CD4-positive, alpha-beta T cell (primary cell): ENCODE measurements at regions of chr11 and their contacts with region 1.

Region 1: DNA sequence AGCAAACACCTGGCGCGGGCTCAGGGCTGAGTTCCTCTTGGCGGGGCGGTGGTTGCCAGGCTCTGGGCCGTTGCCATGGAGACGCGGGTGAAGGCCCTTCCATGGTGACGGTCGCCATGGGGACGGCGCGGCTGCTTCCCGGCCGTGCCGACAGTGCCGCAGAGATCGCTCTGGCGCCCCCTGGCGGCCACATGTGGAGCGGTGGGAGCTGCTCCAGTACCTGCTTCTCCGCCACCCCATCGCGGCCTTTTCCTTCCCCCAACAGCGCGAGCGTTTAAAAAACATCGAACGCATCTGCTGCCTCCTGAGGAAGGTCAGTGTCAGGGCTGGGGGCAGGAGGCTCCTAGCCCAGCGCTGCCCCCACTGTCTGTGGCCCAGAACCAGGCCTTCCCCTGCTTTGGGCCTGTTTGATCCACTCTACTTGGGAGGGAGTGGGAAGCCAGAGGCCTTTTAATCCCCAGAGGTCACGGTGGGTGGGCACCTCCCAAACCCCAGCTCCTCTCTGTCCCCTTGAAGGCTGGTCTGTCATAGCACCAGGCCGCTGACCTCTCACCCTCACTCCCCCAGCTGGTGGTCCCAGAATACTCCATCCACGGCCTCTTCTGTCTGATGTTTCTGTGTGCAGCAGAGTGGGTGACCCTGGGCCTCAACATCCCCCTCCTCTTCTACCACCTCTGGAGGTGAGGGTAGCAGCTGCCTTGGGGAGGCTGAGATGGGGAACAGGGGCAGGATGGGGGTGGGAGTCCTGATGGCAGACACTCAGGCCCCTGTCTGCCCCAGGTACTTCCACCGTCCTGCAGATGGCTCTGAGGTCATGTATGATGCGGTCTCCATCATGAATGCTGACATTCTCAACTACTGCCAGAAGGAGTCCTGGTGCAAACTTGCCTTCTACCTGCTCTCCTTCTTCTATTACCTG is 4.8 kb downstream of the CNIH2 start:
- DNase-seq: peak; percentile 99 to 100 (median 100)
- ATAC-seq: peak; percentile 80
- H3K4me3 ChIP-seq: no peak overlapping the region
- H3K4me3 Mint-ChIP-seq: peak overlapping the region; percentile 79
- H3K27ac ChIP-seq: peak overlapping the region in 1 of 2 donors; percentile 53
- H3K27ac Mint-ChIP-seq: peak overlapping the region; percentile 81
- H3K4me1 ChIP-seq: peaks cover 52% of the 10 kb centered on the region
- H3K4me1 Mint-ChIP-seq: peaks cover 40% of the 10 kb centered on the region
- H3K27me3 ChIP-seq: no peaks in the 10 kb centered on the region
- H3K27me3 Mint-ChIP-seq: no peaks in the 10 kb centered on the region
- CTCF ChIP-seq: peak; percentile 91

Region 2: DNA sequence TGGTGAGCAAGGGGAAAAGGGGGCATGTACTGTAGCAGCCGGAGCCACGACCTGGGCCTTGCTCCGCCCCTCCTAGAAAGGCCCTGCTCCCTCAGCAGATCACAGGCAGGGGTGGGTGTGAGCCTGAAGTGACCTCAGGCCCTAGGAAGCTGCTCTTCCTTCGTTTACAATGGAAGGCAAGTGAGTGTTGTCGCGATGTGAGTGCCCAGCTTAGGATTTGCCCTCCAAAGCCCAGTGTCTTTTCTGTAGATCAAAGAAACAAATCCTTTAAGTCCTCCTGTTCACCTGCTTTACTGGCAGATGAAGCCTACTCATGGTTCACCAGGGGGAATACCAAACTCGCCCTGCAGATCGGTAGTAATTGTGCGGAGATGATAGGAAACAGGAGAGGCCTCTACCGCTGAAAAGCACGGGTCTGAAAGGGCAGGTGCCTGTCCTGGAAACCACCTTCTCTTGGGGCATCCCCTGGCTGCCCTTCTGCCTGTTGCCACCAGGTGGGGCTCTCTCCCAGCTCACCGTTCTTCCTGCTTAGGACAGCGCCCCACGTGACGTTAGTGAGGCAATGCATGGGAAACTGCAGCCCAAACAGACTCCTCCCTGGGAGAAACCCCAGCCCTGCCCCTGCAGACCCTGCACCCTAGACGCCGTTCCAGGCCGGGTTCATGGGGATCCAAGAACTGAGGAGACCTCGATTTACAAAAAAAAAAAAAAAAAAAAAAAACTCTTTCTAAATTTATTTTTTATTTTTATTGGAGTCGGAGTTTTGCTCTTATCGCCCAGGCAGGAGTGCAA is 60.2 kb before region 1 on chr11:
- CTCF ChIA-PET with region 1: interaction called, 54 read pairs
- POLR2A ChIA-PET with region 1: interaction called, 7 read pairs
- intact Hi-C with region 1: loop called (anchors 1 kb)
- DNase-seq: peak; percentile 85 to 99 (median 90)
- ATAC-seq: peak; percentile 98
- H3K4me3 ChIP-seq: no peak overlapping the region
- H3K4me3 Mint-ChIP-seq: no peak overlapping the region
- H3K27ac ChIP-seq: peak overlapping the region; percentile 80 to 94
- H3K27ac Mint-ChIP-seq: peak overlapping the region; percentile 90
- H3K4me1 ChIP-seq: peaks cover 15% of the 10 kb centered on the region
- H3K4me1 Mint-ChIP-seq: peaks cover 7% of the 10 kb centered on the region
- H3K27me3 ChIP-seq: no peaks in the 10 kb centered on the region
- H3K27me3 Mint-ChIP-seq: no peaks in the 10 kb centered on the region
- CTCF ChIP-seq: peak; percentile 100

Region 3: DNA sequence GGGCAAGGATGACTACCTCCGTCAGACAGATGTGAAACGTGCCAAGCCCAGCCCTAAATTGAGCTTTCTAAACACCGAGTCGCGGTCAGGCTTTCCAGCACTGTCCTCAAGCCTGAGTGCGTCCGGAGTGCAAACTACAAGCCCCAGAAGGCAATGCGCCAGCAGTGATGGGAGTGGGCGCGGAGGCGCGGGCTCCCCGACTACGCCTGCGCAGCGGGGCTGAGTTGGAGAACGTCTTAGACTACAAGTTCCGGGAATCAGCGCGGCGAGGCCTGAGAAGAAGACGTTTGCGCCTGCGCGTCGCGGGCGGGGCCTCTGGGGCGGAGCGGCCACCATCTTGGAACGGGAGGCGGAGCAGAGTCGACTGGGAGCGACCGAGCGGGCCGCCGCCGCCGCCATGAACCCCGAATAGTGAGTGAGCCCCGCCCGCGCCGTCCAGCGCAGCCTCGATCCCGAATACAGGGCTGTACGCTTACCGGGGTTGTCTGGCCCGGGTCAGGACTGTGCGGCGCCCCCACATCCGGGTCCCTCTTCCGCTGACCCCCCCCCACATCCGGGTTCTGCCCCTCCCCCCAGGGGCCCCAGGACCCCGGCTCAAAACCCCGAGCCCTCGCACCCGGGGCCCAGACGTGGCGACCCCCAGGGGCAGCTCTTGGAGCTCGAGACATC is 14.3 kb before region 1 on chr11 and contains the start of gene RAB1B:
- CTCF ChIA-PET with region 1: interaction called, 36 read pairs
- POLR2A ChIA-PET with region 1: interaction called, 34 read pairs
- intact Hi-C with region 1: loop called in 1 of 2 experiments (anchors 1 kb)
- DNase-seq: peak; percentile 99 to 100 (median 100)
- ATAC-seq: peak; percentile 82
- H3K4me3 ChIP-seq: peak within 1 kb of the TSS; percentile 99
- H3K4me3 Mint-ChIP-seq: peak within 1 kb of the TSS; percentile 96
- H3K27ac ChIP-seq: peak within 1 kb of the TSS; percentile 83 to 87
- H3K27ac Mint-ChIP-seq: peak within 1 kb of the TSS; percentile 100
- H3K4me1 ChIP-seq: peaks cover 58% of the 10 kb centered on the region
- H3K4me1 Mint-ChIP-seq: peaks cover 45% of the 10 kb centered on the region
- H3K27me3 ChIP-seq: no peaks in the 10 kb centered on the region
- H3K27me3 Mint-ChIP-seq: no peaks in the 10 kb centered on the region
- CTCF ChIP-seq: no peak
- total RNA-seq, gene RAB1B: 27.4 to 29.4 TPM